Tibial artery (tissue), 4 donors: ENCODE measurements at regions of chr3 and their contacts with region 1.

Region 1: GRCh38 chr3:9792405-9793160 is at the starts of genes ARPC4 and TADA3:
- DNase-seq: peak; percentile 94 to 96
- H3K4me3 ChIP-seq: peak within 1 kb of the TSS; percentile 68 to 95
- H3K27ac ChIP-seq: peak within 1 kb of the TSS; percentile 94 to 97
- H3K4me1 ChIP-seq: peaks cover 0 to 44% (median 37%) of the 10 kb centered on the region in 4 donors
- H3K27me3 ChIP-seq: no peaks in the 10 kb centered on the region
- CTCF ChIP-seq: peak; percentile 21 to 37

Region 2: GRCh38 chr3:9769426-9770275 is 22.9 kb before region 1 on chr3 and contains the start of gene CAMK1:
- intact Hi-C with region 1: loop called (anchors 2 kb)
- DNase-seq: peak; percentile 85 to 92
- H3K4me3 ChIP-seq: peak within 1 kb of the TSS; percentile 68 to 76
- H3K27ac ChIP-seq: peak within 1 kb of the TSS; percentile 87 to 93
- H3K4me1 ChIP-seq: peaks cover 0 to 38% (median 25%) of the 10 kb centered on the region in 4 donors
- H3K27me3 ChIP-seq: no peaks in the 10 kb centered on the region
- CTCF ChIP-seq: no peak

Region 3: GRCh38 chr3:9808345-9809037 is 15.9 kb after region 1 on chr3:
- intact Hi-C with region 1: loop called (anchors 1 kb)
- DNase-seq: no peak
- H3K4me3 ChIP-seq: no peak overlapping the region
- H3K27ac ChIP-seq: peak overlapping the region; percentile 97 to 98
- H3K4me1 ChIP-seq: peaks cover 0 to 16% (median 13%) of the 10 kb centered on the region in 4 donors
- H3K27me3 ChIP-seq: no peaks in the 10 kb centered on the region
- CTCF ChIP-seq: no peak